GM12878 (cell line): ENCODE measurements at regions of chr2 and their contacts with region 1.

Region 1: GRCh38 chr2:25228848-25229278 is 60.5 kb upstream of the POMC start:
- DNase-seq: no peak
- ATAC-seq: peak; percentile 64
- H3K4me3 ChIP-seq: no peak overlapping the region
- H3K27ac ChIP-seq: no peak overlapping the region
- H3K4me1 ChIP-seq: peaks cover 29% of the 10 kb centered on the region
- H3K27me3 ChIP-seq: no peaks in the 10 kb centered on the region
- CTCF ChIP-seq: peak; percentile 60 to 82 (median 63)
- EP300 ChIP-seq: no peak
- POLR2A ChIP-seq: no peak
- RAD21 ChIP-seq: peak; percentile 55

Region 2: GRCh38 chr2:25197336-25198208 is 31.3 kb before region 1 on chr2:
- CTCF ChIA-PET with region 1: interaction called, 36 read pairs
- POLR2A ChIA-PET with region 1: interaction called, 3 read pairs
- RAD21 ChIA-PET with region 1: interaction called, 7 read pairs
- SMC1A ChIA-PET with region 1: interaction called, 5 read pairs
- in situ Hi-C with region 1: no loop called
- intact Hi-C with region 1: loop called (anchors 2 kb)
- DNase-seq: no peak
- ATAC-seq: no peak
- H3K4me3 ChIP-seq: no peak overlapping the region
- H3K27ac ChIP-seq: no peak overlapping the region
- H3K4me1 ChIP-seq: peaks cover 7% of the 10 kb centered on the region; the same call in 1 of the 2 replicates
- H3K27me3 ChIP-seq: no peaks in the 10 kb centered on the region
- CTCF ChIP-seq: no peak
- EP300 ChIP-seq: no peak
- POLR2A ChIP-seq: no peak
- RAD21 ChIP-seq: no peak

Region 3: GRCh38 chr2:25204190-25204838 is 24.5 kb before region 1 on chr2:
- CTCF ChIA-PET with region 1: interaction called, 36 read pairs
- POLR2A ChIA-PET with region 1: interaction called, 4 read pairs
- RAD21 ChIA-PET with region 1: no interaction called
- SMC1A ChIA-PET with region 1: interaction called, 41 read pairs
- in situ Hi-C with region 1: no loop called
- intact Hi-C with region 1: no loop called
- DNase-seq: no peak
- ATAC-seq: peak; percentile 69
- H3K4me3 ChIP-seq: 0 out of 2 replicates have a peak overlapping the region, but pooled peaks have one; percentile 32
- H3K27ac ChIP-seq: peak overlapping the region; percentile 31
- H3K4me1 ChIP-seq: peaks cover 25% of the 10 kb centered on the region
- H3K27me3 ChIP-seq: no peaks in the 10 kb centered on the region
- CTCF ChIP-seq: no peak
- EP300 ChIP-seq: no peak
- POLR2A ChIP-seq: 0 out of 2 replicates have a peak, but pooled peaks have one; percentile 19
- RAD21 ChIP-seq: no peak

Region 4: DNA sequence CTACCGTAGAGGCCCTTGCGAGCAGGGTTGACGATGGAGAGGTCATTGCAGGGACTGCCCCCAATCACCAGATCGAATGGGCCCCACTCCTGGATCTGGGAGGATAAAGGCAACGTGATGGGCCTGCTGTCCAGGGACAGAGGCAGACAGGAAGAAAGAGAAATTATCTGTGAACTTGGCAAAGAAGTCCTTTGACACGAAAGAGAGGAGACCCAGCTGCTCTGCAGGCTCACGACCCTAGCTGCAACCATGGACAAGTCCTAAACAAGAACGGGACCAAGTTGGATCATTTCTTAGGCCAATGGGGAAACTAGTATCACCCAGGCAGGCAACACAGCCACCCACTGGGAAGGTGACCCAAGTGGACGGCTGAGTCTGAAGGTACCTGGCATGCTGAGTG is 11.8 kb after region 1 on chr2:
- CTCF ChIA-PET with region 1: interaction called, 13 read pairs
- POLR2A ChIA-PET with region 1: no interaction called
- RAD21 ChIA-PET with region 1: no interaction called
- SMC1A ChIA-PET with region 1: interaction called, 3 read pairs
- in situ Hi-C with region 1: no loop called
- intact Hi-C with region 1: no loop called
- DNase-seq: no peak
- ATAC-seq: no peak
- H3K4me3 ChIP-seq: no peak overlapping the region
- H3K27ac ChIP-seq: no peak overlapping the region
- H3K4me1 ChIP-seq: no peaks in the 10 kb centered on the region
- H3K27me3 ChIP-seq: no peaks in the 10 kb centered on the region
- CTCF ChIP-seq: no peak
- EP300 ChIP-seq: no peak
- POLR2A ChIP-seq: no peak
- RAD21 ChIP-seq: no peak

Region 5: DNA sequence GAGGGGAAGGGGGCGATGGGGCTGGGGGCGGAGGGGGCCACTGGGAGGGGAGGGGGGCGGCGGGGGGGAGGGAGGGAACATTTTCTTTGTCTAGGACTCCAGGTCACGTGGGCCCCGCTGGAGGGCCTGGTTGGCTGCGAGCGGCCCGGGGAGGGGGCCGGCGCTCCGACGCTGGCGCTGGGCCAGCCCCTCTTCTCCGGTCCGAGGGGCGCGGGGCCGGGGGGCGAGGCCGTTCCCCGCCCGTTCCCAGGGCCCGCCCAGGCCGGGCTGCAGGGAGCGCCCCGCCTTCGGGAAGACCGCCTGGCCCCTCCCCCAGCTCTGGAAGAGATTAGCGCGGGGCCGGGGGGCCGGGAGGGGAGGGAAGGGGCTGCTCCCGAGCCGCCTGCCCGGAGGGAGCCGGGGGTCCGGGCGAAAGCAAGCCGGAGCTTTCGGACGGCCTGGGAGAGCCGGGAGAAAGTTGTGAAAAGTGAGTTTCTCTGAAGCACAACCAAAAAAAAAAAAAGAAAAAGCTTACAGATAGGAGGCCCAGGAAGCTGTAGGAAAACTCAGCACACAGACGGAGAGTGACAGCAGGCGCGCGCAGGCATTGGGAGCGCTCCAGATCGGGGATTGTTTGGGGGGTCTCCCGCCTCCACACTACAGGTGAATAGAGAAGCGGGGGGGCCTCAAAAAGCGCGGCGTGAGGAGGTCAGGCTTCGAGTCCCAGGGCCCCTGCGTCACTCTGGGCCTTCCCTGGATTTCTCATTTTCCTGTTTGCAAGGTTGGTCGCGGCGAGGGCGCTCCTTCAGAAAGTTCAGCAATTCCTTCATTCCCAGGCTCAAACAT is 23.6 kb after region 1 on chr2:
- CTCF ChIA-PET with region 1: interaction called, 12 read pairs
- POLR2A ChIA-PET with region 1: interaction called, 3 read pairs
- RAD21 ChIA-PET with region 1: interaction called, 4 read pairs
- SMC1A ChIA-PET with region 1: interaction called, 5 read pairs
- in situ Hi-C with region 1: no loop called
- intact Hi-C with region 1: no loop called
- DNase-seq: no peak
- ATAC-seq: peak; percentile 81
- H3K4me3 ChIP-seq: peak overlapping the region; percentile 82
- H3K27ac ChIP-seq: peak overlapping the region; percentile 25; the same call in 1 of the 2 replicates
- H3K4me1 ChIP-seq: peaks cover 11% of the 10 kb centered on the region
- H3K27me3 ChIP-seq: no peaks in the 10 kb centered on the region
- CTCF ChIP-seq: no peak
- EP300 ChIP-seq: no peak
- POLR2A ChIP-seq: no peak
- RAD21 ChIP-seq: no peak

Region 6: DNA sequence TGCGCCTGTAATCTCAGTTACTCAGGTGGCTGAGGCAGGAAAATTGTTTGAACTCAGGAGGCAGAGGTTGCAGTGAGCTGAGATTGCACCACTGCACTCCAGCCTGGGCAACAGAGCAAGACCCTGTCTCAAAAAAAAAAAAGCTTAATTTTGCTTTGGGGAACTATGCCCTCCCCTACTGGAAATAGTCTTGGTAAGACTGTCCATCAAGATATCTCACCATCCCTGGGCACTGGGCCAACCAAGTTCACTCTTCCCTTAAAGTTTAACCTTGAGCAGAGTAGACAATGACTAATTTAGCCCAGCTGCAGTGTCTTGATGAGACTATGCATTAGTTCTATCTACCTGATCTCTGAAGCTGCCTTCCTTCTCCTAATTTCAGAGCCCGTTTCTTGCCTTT is 604.7 kb after region 1 on chr2:
- CTCF ChIA-PET with region 1: no interaction called
- POLR2A ChIA-PET with region 1: no interaction called
- RAD21 ChIA-PET with region 1: no interaction called
- SMC1A ChIA-PET with region 1: no interaction called
- in situ Hi-C with region 1: no loop called
- intact Hi-C with region 1: no loop called
- DNase-seq: no peak
- ATAC-seq: no peak
- H3K4me3 ChIP-seq: no peak overlapping the region
- H3K27ac ChIP-seq: no peak overlapping the region
- H3K4me1 ChIP-seq: no peaks in the 10 kb centered on the region
- H3K27me3 ChIP-seq: no peaks in the 10 kb centered on the region
- CTCF ChIP-seq: no peak
- EP300 ChIP-seq: no peak
- POLR2A ChIP-seq: no peak
- RAD21 ChIP-seq: no peak